ENCODE measurements at regions of chr10 and their contacts with region 1.

Region 1: DNA sequence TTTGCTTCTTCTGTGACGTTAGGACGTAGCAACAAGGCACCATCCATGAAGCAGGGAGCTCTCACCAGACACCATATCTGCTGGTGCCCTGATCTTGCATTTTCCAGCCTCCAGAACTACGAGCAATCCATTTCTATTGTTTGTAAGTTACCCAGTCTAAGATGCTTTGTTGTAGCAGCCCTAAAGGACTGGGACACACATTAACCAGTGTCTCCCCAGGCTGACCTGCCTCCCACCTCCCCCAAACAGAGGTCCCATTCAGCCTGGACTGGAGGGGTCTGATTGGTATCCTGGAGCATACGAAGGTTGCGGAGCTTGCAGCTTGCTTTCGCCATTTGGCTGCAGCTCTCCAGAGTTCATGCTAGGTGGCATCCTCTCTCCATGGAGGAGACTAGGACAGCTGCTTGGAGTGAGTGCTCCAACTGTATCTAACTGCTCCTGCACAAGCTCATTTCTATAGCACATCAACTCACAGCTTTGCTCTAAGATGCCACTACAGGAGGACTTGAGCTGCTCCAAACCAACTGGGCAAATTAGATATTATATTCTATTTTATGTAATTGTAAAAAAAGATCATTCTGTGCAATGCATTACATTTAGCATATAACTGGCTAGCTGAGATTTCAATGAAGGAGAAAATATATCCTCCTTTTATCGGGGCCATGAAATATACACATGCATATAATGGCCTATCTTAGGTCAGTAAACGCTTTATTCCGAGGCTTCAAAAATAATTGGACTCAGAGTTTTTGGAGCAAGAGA is 8.0 kb upstream of the GRK5 start:
- DNase-seq: peak; percentile 60
- H3K4me3 Mint-ChIP-seq: no peak overlapping the region
- H3K27ac Mint-ChIP-seq: no peak overlapping the region
- H3K4me1 Mint-ChIP-seq: peaks cover 13% of the 10 kb centered on the region
- H3K27me3 Mint-ChIP-seq: peaks cover 1% of the 10 kb centered on the region

Region 2: GRCh38 chr10:119115896-119116295 is 83.5 kb before region 1 on chr10:
- CTCF ChIA-PET with region 1: no interaction called
- POLR2A ChIA-PET with region 1: no interaction called
- intact Hi-C with region 1: no loop called
- DNase-seq: no peak
- H3K4me3 Mint-ChIP-seq: no peak overlapping the region
- H3K27ac Mint-ChIP-seq: no peak overlapping the region
- H3K4me1 Mint-ChIP-seq: peaks cover 9% of the 10 kb centered on the region
- H3K27me3 Mint-ChIP-seq: no peaks in the 10 kb centered on the region

Region 3: GRCh38 chr10:119139464-119140067 is 59.8 kb before region 1 on chr10:
- CTCF ChIA-PET with region 1: interaction called, 5 read pairs
- POLR2A ChIA-PET with region 1: no interaction called
- intact Hi-C with region 1: loop called (anchors 1 kb)
- DNase-seq: peak; percentile 74
- H3K4me3 Mint-ChIP-seq: no peak overlapping the region
- H3K27ac Mint-ChIP-seq: peak overlapping the region; percentile 39
- H3K4me1 Mint-ChIP-seq: peaks cover 17% of the 10 kb centered on the region
- H3K27me3 Mint-ChIP-seq: no peaks in the 10 kb centered on the region

Region 4: GRCh38 chr10:119416855-119417254 is 217.4 kb after region 1 on chr10:
- CTCF ChIA-PET with region 1: interaction called, 30 read pairs
- POLR2A ChIA-PET with region 1: interaction called, 5 read pairs
- intact Hi-C with region 1: loop called (anchors 1 kb)
- DNase-seq: peak; percentile 81
- H3K4me3 Mint-ChIP-seq: no peak overlapping the region
- H3K27ac Mint-ChIP-seq: no peak overlapping the region
- H3K4me1 Mint-ChIP-seq: no peaks in the 10 kb centered on the region
- H3K27me3 Mint-ChIP-seq: no peaks in the 10 kb centered on the region

Region 5: DNA sequence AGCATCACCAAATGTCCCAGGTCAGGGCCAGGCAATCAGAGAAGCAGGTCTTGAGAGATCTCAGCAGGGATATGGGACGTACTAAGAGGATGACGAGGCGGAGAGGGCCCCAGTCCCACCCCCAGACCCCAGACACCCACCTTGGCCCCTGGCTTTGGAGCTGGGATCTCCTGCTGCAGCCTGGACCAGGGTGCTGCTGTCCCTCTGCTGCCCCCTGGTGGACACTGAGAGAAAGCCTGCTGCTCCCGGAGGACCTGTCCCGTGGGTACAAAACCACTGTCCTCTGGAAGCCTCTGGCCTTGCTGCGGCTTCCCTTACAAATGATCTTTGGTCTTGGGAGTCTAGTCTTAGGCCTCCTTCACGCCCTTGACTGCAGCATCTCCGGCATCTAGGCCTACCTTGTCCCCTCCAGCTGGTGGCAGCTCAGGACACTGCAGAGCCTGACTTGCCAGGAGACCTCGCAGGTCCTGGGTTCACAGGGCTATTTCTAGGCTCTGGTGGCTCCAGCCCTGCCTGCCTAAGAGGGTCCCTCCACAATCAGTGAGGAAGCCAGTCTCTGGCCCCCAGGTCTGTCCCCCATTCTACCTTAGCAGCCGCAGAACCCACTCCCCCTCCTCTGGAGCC is 246.0 kb after region 1 on chr10:
- CTCF ChIA-PET with region 1: interaction called, 103 read pairs
- POLR2A ChIA-PET with region 1: interaction called, 3 read pairs
- intact Hi-C with region 1: loop called (anchors 1 kb)
- DNase-seq: peak; percentile 87
- H3K4me3 Mint-ChIP-seq: no peak overlapping the region
- H3K27ac Mint-ChIP-seq: no peak overlapping the region
- H3K4me1 Mint-ChIP-seq: no peaks in the 10 kb centered on the region
- H3K27me3 Mint-ChIP-seq: no peaks in the 10 kb centered on the region

Region 6: DNA sequence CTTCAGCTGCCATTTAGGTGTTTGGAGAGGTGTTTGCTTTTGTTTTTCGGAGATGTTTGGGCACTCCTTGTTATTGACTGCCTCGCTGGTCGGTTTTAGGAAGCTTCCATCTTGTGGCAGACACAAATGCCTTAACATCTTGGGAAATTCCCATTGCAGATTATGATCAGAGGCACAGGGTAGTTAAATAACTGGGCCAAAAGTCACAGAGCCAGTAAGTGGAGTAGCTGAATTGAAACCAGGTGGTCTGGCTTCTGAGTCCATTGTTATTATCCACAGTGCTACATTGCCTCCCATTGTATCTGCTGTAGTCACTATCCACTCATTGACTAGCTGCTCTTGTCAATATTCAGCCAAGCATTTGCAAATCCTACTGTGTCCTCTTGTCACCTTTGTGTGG is 1119.5 kb after region 1 on chr10:
- CTCF ChIA-PET with region 1: no interaction called
- POLR2A ChIA-PET with region 1: no interaction called
- intact Hi-C with region 1: no loop called
- DNase-seq: no peak
- H3K4me3 Mint-ChIP-seq: no peak overlapping the region
- H3K27ac Mint-ChIP-seq: no peak overlapping the region
- H3K4me1 Mint-ChIP-seq: no peaks in the 10 kb centered on the region
- H3K27me3 Mint-ChIP-seq: peaks cover 6% of the 10 kb centered on the region